GM10248 (cell line): ENCODE measurements at regions of chr9 and their contacts with region 1.

Region 1: DNA sequence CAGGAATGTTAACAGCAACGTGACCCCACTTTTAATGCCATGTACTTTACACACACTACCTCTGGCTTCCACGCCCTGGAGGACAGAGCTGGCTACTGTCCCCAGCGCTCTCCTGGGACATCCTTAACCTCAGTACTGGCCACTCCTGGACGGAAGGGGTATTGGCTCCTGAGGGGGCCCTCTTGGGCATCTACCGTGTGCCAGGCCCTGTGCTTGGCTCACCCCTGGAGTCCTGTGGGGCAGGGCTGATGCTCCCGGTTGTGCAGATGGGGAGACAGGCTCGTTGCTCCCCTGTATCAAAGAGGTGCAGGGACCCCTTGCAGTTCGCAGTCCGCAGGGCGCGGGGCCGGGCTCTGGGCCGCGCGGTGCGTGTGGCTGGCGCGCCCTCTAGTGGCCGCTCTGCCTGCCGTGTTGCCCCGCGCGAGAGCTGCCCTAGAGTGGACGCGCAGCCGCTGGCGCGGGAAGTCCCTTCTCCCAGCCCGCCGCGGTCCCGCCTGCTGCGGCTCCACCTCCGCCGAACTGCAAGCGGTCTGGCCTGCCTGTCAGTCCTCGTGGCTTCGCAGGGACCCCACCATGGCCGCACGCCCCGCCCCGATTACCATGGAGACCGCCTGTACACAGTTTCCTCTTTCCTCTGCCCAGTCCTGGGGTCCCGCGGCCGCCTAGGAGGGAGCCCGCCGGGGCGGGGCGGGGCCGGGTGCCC is at the start of gene WDR38:
- DNase-seq: peak; percentile 89
- CTCF ChIP-seq: peak; percentile 97

Region 2: DNA sequence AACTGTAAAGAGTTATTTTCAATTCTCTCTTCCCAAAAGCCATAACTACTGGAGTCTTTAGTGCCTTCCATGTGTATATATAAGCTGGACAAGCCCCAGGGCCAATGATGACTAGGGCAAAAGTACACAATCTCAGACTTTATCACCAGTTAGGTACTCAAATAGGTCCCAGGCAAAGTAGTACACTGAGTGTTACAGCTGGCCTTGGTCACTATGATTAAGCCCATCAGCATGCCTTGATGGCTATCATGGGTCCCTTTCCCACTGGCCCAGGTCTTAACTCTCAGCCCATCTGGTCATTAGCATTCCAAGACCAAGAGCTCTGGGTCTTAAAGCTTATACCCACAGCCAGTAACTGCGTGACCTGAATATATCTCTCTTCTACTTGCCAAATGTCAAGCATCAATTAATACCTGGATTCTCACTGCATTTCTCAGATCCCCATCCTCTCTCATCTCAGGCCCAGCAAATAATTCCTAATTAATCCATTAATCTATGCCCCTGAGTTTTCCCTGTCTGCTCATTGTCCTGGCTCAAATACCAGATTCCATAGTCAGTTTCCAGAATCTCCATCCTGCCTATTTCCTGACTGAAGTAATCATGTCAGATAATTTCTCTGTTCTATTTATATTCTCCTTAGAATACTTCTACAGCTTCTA is 144.2 kb before region 1 on chr9:
- CTCF ChIA-PET with region 1: interaction called, 19 read pairs
- POLR2A ChIA-PET with region 1: no interaction called
- DNase-seq: no peak
- CTCF ChIP-seq: no peak

Region 3: DNA sequence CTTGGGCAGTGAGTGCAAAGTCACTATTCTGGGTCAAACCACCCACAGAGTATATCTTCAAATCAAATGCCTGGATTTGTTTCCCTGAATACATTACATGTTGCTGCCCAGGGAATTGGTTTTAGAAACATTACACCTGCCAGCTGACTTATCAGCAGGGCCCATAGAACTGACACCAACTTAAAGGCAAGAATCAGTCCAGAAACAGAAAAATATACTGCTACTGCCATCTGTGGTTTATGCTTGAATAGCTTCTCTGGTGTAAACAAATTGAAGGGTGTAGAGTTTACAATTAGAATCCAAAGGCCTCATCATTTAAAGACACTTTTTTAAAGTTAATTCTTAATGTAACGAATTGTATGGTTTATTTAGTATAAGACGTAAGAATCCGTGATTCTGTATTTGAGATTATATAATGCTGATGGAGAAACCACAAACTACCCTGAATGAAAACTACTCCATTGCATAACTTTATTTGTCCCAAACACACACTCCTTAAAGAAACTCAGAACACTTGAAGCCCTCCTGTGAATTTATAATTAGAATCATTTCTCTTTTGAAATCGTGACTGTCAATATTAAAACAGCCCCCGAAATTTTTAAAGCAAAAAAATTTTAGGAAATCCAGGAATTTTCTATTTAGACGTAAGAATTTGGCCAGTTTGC is 88.1 kb before region 1 on chr9:
- CTCF ChIA-PET with region 1: interaction called, 814 read pairs
- POLR2A ChIA-PET with region 1: no interaction called
- DNase-seq: peak; percentile 52
- CTCF ChIP-seq: peak; percentile 24

Region 4: DNA sequence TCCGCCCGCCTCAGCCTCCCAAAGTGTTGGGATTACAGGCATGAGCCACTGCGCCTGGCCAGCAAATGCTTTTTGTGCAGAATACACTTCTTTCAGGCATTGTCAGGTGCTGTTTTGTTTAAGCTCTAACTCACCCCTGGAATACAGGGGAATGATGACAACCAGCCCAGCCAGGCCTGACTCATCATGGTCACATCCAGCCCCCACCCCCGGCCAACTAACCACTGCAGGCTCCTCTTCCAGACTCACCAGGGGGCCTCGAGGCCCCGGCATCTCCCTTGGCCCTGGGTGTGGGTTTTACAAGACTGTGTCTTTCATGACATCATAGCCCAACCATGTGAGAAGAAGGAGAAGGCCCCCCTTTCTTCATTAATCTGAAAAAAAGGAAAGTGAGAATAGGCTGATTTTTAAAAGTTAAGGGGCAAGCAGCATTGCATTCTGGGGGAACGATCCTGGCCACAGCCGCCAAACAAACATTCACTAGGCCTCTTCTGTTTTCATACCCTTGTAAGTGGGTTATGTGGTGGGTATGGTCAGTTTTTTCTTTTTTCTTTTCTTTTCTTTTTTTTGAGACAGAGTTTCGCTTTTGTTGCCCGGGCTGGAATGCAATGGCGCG is 40.5 kb before region 1 on chr9:
- CTCF ChIA-PET with region 1: interaction called, 36 read pairs
- POLR2A ChIA-PET with region 1: no interaction called
- DNase-seq: no peak
- CTCF ChIP-seq: no peak

Region 5: GRCh38 chr9:124839612-124840299 is 13.2 kb before region 1 on chr9:
- CTCF ChIA-PET with region 1: interaction called, 172 read pairs
- POLR2A ChIA-PET with region 1: interaction called, 3 read pairs
- DNase-seq: no peak
- CTCF ChIP-seq: no peak

Region 6: GRCh38 chr9:124934290-124934689 is 81.3 kb after region 1 on chr9:
- CTCF ChIA-PET with region 1: interaction called, 10 read pairs
- POLR2A ChIA-PET with region 1: interaction called, 3 read pairs
- DNase-seq: peak; percentile 22
- CTCF ChIP-seq: no peak

Region 7: GRCh38 chr9:124980429-124980828 is 127.4 kb after region 1 on chr9:
- CTCF ChIA-PET with region 1: no interaction called
- POLR2A ChIA-PET with region 1: no interaction called
- DNase-seq: no peak
- CTCF ChIP-seq: no peak

Region 8: GRCh38 chr9:125028038-125028437 is 175.1 kb after region 1 on chr9:
- CTCF ChIA-PET with region 1: no interaction called
- POLR2A ChIA-PET with region 1: no interaction called
- DNase-seq: no peak
- CTCF ChIP-seq: no peak